Activated CD4-positive, alpha-beta T cell treated with anti-CD3 and anti-CD28 coated beads, Interleukin-2, amount 10 ng/mL, durations not matched to agents 7 days and 5 days (primary cell): ENCODE measurements at regions of chr1 and their contacts with region 1.

Region 1: GRCh38 chr1:26233903-26234643 is at the start of gene CEP85:
- DNase-seq: peak; percentile 98
- H3K4me3 Mint-ChIP-seq: peak within 1 kb of the TSS; percentile 92
- H3K27ac Mint-ChIP-seq: peak within 1 kb of the TSS; percentile 97
- H3K4me1 Mint-ChIP-seq: peaks cover 36% of the 10 kb centered on the region
- H3K27me3 Mint-ChIP-seq: no peaks in the 10 kb centered on the region
- total RNA-seq, gene CEP85: 46.9 to 49.0 TPM

Region 2: GRCh38 chr1:26053718-26054560 is 180.1 kb before region 1 on chr1:
- CTCF ChIA-PET with region 1: no interaction called
- POLR2A ChIA-PET with region 1: no interaction called
- DNase-seq: no peak
- H3K4me3 Mint-ChIP-seq: no peak overlapping the region
- H3K27ac Mint-ChIP-seq: no peak overlapping the region
- H3K4me1 Mint-ChIP-seq: peaks cover 7% of the 10 kb centered on the region
- H3K27me3 Mint-ChIP-seq: peaks cover 51% of the 10 kb centered on the region

Region 3: DNA sequence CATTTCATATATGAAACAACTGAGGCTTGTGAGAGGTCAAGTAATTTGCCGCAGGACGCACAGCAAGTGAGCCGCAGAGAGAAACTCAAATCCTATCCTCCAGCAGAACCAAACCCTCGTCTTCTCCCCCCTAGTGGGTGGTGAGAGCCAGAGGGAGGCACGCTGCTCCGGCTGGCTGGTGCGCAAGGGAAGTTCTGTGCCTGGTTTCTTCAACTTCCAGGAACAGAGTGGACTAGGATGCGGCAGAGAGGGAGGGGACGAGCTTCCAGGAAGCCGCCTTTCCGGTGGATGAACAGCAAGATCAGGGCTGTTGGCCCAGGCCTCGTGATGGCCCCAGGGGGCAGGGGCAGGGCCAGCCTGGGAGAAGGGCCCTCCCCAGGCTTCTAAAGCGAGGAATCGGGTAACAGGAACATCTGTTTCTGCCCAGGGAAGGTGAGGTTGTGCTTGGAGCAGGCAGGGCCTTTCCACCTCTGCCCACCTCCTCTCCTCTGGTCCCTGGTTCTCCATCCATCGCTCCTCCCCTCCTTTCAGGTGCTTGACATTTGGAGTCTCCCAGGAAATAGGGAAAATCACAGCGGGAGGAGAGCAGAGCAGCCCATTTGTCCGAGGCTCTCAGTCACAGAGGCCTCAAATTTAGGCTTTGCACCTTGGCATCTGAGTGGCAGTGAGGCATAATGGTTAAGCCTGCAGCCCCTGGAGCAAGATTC is 139.2 kb before region 1 on chr1:
- CTCF ChIA-PET with region 1: no interaction called
- POLR2A ChIA-PET with region 1: no interaction called
- DNase-seq: no peak
- H3K4me3 Mint-ChIP-seq: no peak overlapping the region
- H3K27ac Mint-ChIP-seq: no peak overlapping the region
- H3K4me1 Mint-ChIP-seq: peaks cover 9% of the 10 kb centered on the region
- H3K27me3 Mint-ChIP-seq: peaks cover 37% of the 10 kb centered on the region

Region 4: GRCh38 chr1:26169669-26170471 is 64.2 kb before region 1 on chr1 and contains the start of gene ZNF593:
- CTCF ChIA-PET with region 1: interaction called, 20 read pairs
- POLR2A ChIA-PET with region 1: interaction called, 3 read pairs
- DNase-seq: peak; percentile 84
- H3K4me3 Mint-ChIP-seq: peak within 1 kb of the TSS; percentile 82
- H3K27ac Mint-ChIP-seq: peak within 1 kb of the TSS; percentile 88
- H3K4me1 Mint-ChIP-seq: peaks cover 34% of the 10 kb centered on the region
- H3K27me3 Mint-ChIP-seq: peaks cover 10% of the 10 kb centered on the region
- total RNA-seq, gene ZNF593: 27.3 to 28.6 TPM

Region 5: GRCh38 chr1:26210147-26210870 is 23.8 kb before region 1 on chr1:
- CTCF ChIA-PET with region 1: interaction called, 31 read pairs
- POLR2A ChIA-PET with region 1: no interaction called
- DNase-seq: no peak
- H3K4me3 Mint-ChIP-seq: no peak overlapping the region
- H3K27ac Mint-ChIP-seq: no peak overlapping the region
- H3K4me1 Mint-ChIP-seq: no peaks in the 10 kb centered on the region
- H3K27me3 Mint-ChIP-seq: peaks cover 11% of the 10 kb centered on the region

Region 6: GRCh38 chr1:26279456-26280332 is 45.6 kb after region 1 on chr1 and contains the start of gene SH3BGRL3:
- CTCF ChIA-PET with region 1: interaction called, 25 read pairs
- POLR2A ChIA-PET with region 1: no interaction called
- DNase-seq: peak; percentile 89
- H3K4me3 Mint-ChIP-seq: peak within 1 kb of the TSS; percentile 86
- H3K27ac Mint-ChIP-seq: peak within 1 kb of the TSS; percentile 90
- H3K4me1 Mint-ChIP-seq: peaks cover 86% of the 10 kb centered on the region
- H3K27me3 Mint-ChIP-seq: no peaks in the 10 kb centered on the region
- total RNA-seq, gene SH3BGRL3: 606 to 707 TPM

Region 7: GRCh38 chr1:26321315-26322041 is 87.4 kb after region 1 on chr1:
- CTCF ChIA-PET with region 1: interaction called, 13 read pairs
- POLR2A ChIA-PET with region 1: no interaction called
- DNase-seq: peak; percentile 96
- H3K4me3 Mint-ChIP-seq: peak overlapping the region; percentile 75
- H3K27ac Mint-ChIP-seq: peak overlapping the region; percentile 90
- H3K4me1 Mint-ChIP-seq: peaks cover 48% of the 10 kb centered on the region
- H3K27me3 Mint-ChIP-seq: no peaks in the 10 kb centered on the region